AG04450 (cell line): ENCODE measurements at regions of chr7 and their contacts with region 1.

Region 1: DNA sequence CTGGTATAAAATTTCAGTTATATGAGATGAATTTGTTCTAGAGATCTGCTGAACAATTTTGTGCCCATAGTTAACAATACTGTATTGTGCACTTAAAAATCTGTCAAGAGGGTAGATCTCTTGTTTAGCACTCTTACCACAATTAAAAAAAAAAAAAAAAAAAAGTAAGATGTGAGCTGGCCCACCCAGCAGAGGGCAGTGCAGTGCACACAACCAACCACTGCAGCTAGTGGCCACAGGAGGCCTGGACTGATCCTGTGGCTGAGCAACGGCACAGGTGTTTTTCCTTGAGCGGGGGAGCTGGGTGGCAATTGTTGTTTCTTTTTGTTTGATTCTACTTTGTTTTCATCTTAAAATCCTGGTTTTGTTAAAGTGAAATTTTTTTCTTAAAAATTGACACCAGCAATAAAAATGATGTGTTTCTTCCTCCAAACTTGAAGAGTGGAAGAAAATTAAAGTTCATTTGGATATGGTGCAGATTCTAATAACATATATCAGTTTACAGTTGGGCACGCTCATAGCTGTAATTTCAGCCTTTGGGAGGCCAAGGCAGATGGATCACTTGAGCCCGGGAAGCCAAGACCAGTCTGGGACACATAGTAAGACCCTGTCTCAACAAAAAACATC is 171.1 kb upstream of the TBX20 start:
- DNase-seq: peak; percentile 10
- H3K4me3 ChIP-seq: no peak overlapping the region
- H3K27ac ChIP-seq: no peak overlapping the region
- H3K27me3 ChIP-seq: no peaks in the 10 kb centered on the region
- CTCF ChIP-seq: peak; percentile 86

Region 2: DNA sequence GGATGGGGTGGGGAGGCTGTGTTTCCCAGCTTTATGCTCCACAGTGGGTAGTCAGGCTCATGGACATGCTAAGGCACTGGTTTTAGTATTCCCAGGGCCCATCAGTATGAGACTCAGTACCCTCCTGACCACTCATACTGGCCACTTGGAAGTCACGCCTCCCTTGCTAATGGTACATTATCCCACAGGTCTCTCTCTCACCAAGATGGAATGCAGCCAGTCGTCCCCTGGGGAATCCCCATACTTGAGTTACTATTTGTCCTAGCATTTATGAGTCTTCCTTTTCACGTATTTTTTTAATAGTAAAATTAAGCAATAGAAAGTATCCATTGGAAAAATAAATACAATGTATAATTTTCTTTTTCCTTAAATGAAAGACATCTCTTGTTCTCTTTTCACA is 90.5 kb before region 1 on chr7:
- CTCF ChIA-PET with region 1: no interaction called
- POLR2A ChIA-PET with region 1: no interaction called
- DNase-seq: no peak
- H3K4me3 ChIP-seq: no peak overlapping the region
- H3K27ac ChIP-seq: no peak overlapping the region
- H3K27me3 ChIP-seq: no peaks in the 10 kb centered on the region
- CTCF ChIP-seq: no peak

Region 3: GRCh38 chr7:35519971-35520809 is 95.2 kb after region 1 on chr7:
- CTCF ChIA-PET with region 1: interaction called, 23 read pairs
- POLR2A ChIA-PET with region 1: interaction called, 5 read pairs
- DNase-seq: peak; percentile 13
- H3K4me3 ChIP-seq: no peak overlapping the region
- H3K27ac ChIP-seq: no peak overlapping the region
- H3K27me3 ChIP-seq: no peaks in the 10 kb centered on the region
- CTCF ChIP-seq: peak; percentile 80

Region 4: GRCh38 chr7:35630024-35630972 is 205.3 kb after region 1 on chr7:
- CTCF ChIA-PET with region 1: interaction called, 124 read pairs
- POLR2A ChIA-PET with region 1: no interaction called
- DNase-seq: no peak
- H3K4me3 ChIP-seq: no peak overlapping the region
- H3K27ac ChIP-seq: no peak overlapping the region
- H3K27me3 ChIP-seq: no peaks in the 10 kb centered on the region
- CTCF ChIP-seq: no peak